Activated CD8-positive, alpha-beta T cell treated with anti-CD3 and anti-CD28 coated beads, Interleukin-2, amount 10 ng/mL, durations not matched to agents 7 days and 5 days (primary cell): ENCODE measurements at regions of chr16 and their contacts with region 1.

Region 1: DNA sequence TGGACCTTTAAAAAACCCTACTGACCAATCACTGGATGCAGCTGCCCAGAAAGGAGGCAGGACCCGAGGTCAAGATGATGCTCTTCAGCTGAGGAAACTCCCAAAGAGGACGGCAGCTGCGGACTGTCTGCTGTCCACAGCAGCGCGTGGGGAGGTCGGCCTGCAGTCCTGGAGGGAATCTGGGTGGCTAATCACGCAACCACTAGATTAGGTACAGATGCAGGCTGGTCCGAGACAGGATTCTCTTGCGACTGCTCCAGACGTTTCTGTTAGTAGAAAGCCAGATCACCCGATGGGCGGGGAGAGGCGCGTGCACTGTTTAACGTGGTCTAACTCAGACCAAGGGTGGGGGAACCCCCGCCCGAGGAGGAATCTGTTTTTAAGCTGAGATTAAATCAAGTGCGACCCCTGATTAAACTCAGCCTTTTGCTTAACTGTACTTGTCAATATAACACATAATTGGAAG is 8.8 kb downstream of the CTRB2 start:
- DNase-seq: no peak
- ATAC-seq: no peak
- H3K4me3 Mint-ChIP-seq: no peak overlapping the region
- H3K27ac Mint-ChIP-seq: no peak overlapping the region
- H3K4me1 Mint-ChIP-seq: peaks cover 25% of the 10 kb centered on the region
- H3K27me3 Mint-ChIP-seq: peaks cover 24% of the 10 kb centered on the region

Region 2: DNA sequence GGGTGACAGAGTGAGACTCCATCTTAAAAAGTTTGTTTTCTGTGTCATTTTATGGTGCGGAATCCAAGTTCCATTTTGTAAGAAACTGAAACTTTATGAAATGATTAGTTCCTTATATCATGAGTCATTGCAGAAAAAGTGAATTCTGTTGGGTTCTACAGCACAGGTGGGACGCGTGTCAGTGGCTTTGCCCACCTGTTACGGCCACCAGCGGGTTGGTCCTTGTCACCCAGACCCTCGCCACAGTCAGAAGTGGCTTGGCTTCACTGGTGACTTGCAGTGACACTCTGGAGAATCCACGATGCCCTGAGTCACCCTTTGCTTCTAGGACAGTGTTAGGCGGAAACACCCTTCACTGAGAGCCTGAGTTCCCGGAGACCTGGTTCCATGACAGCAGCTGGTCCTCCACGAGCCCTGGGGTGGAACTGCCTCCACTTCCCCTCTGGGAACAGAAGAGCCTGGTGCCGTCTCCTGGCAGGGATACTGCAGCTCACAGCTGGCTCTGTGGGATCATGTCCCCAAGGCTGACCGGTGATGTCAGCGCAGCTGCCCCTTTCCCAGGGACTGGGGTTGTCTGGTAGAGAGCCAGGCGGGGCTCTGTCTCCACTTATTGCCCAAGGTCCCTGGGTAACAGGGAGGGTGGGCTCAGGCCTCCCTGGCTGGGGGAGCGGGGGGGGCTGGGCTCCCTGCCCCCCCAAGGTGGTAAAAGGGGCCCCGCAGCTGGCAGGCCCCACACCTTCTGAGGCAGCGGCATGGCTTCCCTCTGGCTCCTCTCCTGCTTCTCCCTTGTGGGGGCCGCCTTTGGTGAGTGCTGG is 20.3 kb after region 1 on chr16 and contains the start of gene CTRB1:
- CTCF ChIA-PET with region 1: interaction called, 63 read pairs
- POLR2A ChIA-PET with region 1: interaction called, 3 read pairs
- DNase-seq: no peak
- ATAC-seq: no peak
- H3K4me3 Mint-ChIP-seq: peak within 1 kb of the TSS; percentile 68
- H3K27ac Mint-ChIP-seq: peak within 1 kb of the TSS; percentile 92
- H3K4me1 Mint-ChIP-seq: peaks cover 19% of the 10 kb centered on the region
- H3K27me3 Mint-ChIP-seq: no peaks in the 10 kb centered on the region
- total RNA-seq, gene CTRB1: not detected

Region 3: GRCh38 chr16:75234856-75235696 is 36.9 kb after region 1 on chr16:
- CTCF ChIA-PET with region 1: interaction called, 46 read pairs
- POLR2A ChIA-PET with region 1: no interaction called
- DNase-seq: no peak
- ATAC-seq: no peak
- H3K4me3 Mint-ChIP-seq: no peak overlapping the region
- H3K27ac Mint-ChIP-seq: no peak overlapping the region
- H3K4me1 Mint-ChIP-seq: peaks cover 1% of the 10 kb centered on the region
- H3K27me3 Mint-ChIP-seq: peaks cover 5% of the 10 kb centered on the region

Region 4: DNA sequence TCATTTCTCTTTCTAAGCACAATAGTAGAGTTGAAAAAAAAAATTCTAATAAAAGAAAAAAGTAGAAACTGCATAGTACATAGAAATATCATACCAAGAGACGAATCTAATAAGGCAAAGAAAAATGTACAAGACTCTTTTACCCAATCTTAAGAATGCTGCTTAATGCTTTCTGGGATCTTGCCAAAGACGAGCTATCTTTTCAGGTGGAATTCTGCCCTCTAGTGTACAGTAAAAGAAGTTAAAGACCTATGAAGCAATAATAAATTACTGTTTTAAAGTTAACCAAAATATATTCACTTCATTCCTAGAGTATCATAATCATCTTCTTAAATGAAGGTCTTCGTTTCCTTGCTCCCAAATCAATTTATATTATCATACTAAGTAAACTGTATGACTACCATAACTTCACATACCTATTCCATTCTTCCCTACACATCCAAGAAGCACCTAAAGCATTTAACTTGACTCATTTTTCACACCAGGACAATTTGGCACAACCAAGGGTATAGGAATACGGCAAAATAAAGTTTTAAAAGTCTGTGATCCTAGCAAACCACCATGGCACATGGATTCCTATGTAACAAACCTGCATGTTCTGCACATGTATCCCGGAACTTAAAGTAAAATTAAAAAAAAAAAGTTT is 187.5 kb after region 1 on chr16:
- CTCF ChIA-PET with region 1: interaction called, 46 read pairs
- POLR2A ChIA-PET with region 1: no interaction called
- DNase-seq: peak; percentile 26
- ATAC-seq: peak; percentile 11
- H3K4me3 Mint-ChIP-seq: no peak overlapping the region
- H3K27ac Mint-ChIP-seq: no peak overlapping the region
- H3K4me1 Mint-ChIP-seq: peaks cover 8% of the 10 kb centered on the region
- H3K27me3 Mint-ChIP-seq: peaks cover 14% of the 10 kb centered on the region

Region 5: GRCh38 chr16:75402821-75403475 is 204.8 kb after region 1 on chr16:
- CTCF ChIA-PET with region 1: interaction called, 25 read pairs
- POLR2A ChIA-PET with region 1: no interaction called
- DNase-seq: no peak
- ATAC-seq: no peak
- H3K4me3 Mint-ChIP-seq: no peak overlapping the region
- H3K27ac Mint-ChIP-seq: no peak overlapping the region
- H3K4me1 Mint-ChIP-seq: no peaks in the 10 kb centered on the region
- H3K27me3 Mint-ChIP-seq: no peaks in the 10 kb centered on the region

Region 6: GRCh38 chr16:75519881-75520280 is 321.7 kb after region 1 on chr16:
- CTCF ChIA-PET with region 1: interaction called, 14 read pairs
- POLR2A ChIA-PET with region 1: no interaction called
- DNase-seq: no peak
- ATAC-seq: no peak
- H3K4me3 Mint-ChIP-seq: no peak overlapping the region
- H3K27ac Mint-ChIP-seq: no peak overlapping the region
- H3K4me1 Mint-ChIP-seq: peaks cover 13% of the 10 kb centered on the region
- H3K27me3 Mint-ChIP-seq: no peaks in the 10 kb centered on the region